Testis (tissue), 5 donors: ENCODE measurements at regions of chr2 and their contacts with region 1.

Region 1: DNA sequence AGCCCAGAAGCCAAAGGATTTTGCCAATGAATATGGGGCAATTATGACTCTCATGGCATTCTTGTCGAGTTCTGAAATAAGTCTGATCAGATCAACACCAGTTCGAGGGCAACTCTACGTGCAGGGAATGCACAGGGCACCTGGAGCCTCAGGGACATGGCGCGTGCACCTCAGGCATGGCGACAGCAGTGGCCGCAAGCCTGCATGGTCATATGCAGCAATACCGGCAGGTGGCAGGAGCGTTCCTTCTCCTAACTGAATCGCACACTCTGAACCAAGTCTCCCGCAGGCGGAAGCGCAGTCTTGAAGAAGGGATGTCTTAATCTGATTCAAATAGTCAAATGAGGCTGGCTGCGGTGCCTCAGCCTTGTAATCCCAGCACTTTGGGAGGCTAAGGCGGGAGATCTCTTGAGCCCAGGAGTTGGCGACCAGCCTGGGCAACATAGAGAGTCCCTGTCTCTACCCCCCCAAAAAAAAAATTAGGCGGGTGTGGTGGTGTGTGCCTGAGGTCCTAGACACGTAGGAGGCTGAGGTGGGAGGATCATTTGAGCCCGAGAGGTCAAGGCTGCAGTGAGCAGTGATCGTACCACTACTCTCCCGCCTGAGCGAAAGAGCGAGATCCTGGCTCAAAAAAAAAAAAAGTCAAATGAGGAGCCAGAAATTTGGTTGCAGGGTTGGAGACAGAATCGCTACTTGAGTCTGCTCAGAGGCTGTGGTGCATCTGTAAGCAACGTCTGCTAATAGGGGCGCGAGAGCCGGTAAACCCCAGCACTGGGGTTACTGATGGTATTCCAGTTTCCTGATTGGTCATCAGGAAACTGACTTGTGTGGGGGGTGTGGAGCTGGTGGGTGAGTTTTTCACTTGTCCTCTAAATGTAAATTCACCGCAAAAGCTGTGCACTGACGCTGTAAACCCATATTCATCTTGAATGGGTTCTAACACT is 28.8 kb downstream of the FHL2 start:
- DNase-seq: peak; percentile 95
- H3K4me3 ChIP-seq: no peak overlapping the region
- H3K27ac ChIP-seq: peak overlapping the region in 1 of 2 donors; percentile 65
- H3K4me1 ChIP-seq: peaks cover 56% of the 10 kb centered on the region
- H3K27me3 ChIP-seq: no peaks in the 10 kb centered on the region
- CTCF ChIP-seq: peak; percentile 78 to 93 (median 88)
- POLR2A ChIP-seq: no peak

Region 2: DNA sequence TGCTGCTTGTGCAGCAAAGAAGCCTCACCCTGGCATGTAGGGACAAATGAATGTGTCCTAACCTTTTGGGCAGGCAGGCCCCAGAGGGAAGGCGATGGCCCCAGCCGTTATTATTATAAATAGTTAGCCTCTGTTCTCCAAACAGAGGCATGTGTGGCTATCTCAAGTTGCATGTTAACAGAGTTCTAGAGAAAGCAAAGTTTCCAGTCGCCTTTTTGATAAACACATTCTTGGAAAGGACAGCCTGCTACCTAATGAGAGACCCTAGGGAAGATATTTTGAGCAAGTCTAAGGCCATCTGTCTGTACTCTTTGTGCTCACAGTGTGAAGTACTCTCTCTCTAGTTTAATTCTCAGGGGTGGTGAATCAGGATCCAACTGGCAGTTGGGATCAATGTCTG is 126.3 kb after region 1 on chr2:
- intact Hi-C with region 1: loop called (anchors 10 kb)
- DNase-seq: no peak
- H3K4me3 ChIP-seq: no peak overlapping the region
- H3K27ac ChIP-seq: peak overlapping the region; percentile 75 to 76
- H3K4me1 ChIP-seq: peaks cover 24% of the 10 kb centered on the region
- H3K27me3 ChIP-seq: no peaks in the 10 kb centered on the region
- CTCF ChIP-seq: no peak
- POLR2A ChIP-seq: no peak

Region 3: GRCh38 chr2:105517814-105518705 is 148.0 kb after region 1 on chr2:
- intact Hi-C with region 1: loop called (anchors 5 kb)
- DNase-seq: peak; percentile 68
- H3K4me3 ChIP-seq: no peak overlapping the region
- H3K27ac ChIP-seq: no peak overlapping the region
- H3K4me1 ChIP-seq: peaks cover 15% of the 10 kb centered on the region
- H3K27me3 ChIP-seq: no peaks in the 10 kb centered on the region
- CTCF ChIP-seq: no peak
- POLR2A ChIP-seq: no peak